ENCODE measurements at regions of chr12 and their contacts with region 1.

Region 1: GRCh38 chr12:54749191-54749818 is 101.1 kb upstream of the DCD start:
- DNase-seq: peak; percentile 41 to 65 (median 59)
- H3K4me3 ChIP-seq: no peak overlapping the region
- H3K4me3 Mint-ChIP-seq: peak overlapping the region in 7 of 8 donors; percentile 50 to 73 (median 68)
- H3K27ac ChIP-seq: no peak overlapping the region
- H3K27ac Mint-ChIP-seq: peak overlapping the region in 2 of 7 donors; percentile 48 to 63
- H3K4me1 ChIP-seq: peaks cover 18% of the 10 kb centered on the region
- H3K4me1 Mint-ChIP-seq: peaks cover 13 to 40% (median 21%) of the 10 kb centered on the region in 4 donors
- H3K27me3 ChIP-seq: no peaks in the 10 kb centered on the region
- H3K27me3 Mint-ChIP-seq: no peaks in the 10 kb centered on the region

Region 2: GRCh38 chr12:54701940-54702592 is 47.2 kb before region 1 on chr12:
- CTCF ChIA-PET with region 1: interaction called, 25 read pairs
- POLR2A ChIA-PET with region 1: no interaction called
- intact Hi-C with region 1: no loop called
- DNase-seq: peak in 4 of 5 donors; percentile 48 to 55 (median 54)
- H3K4me3 ChIP-seq: no peak overlapping the region
- H3K4me3 Mint-ChIP-seq: no peak overlapping the region
- H3K27ac ChIP-seq: no peak overlapping the region
- H3K27ac Mint-ChIP-seq: no peak overlapping the region
- H3K4me1 ChIP-seq: no peaks in the 10 kb centered on the region
- H3K4me1 Mint-ChIP-seq: no peaks in the 10 kb centered on the region
- H3K27me3 ChIP-seq: no peaks in the 10 kb centered on the region
- H3K27me3 Mint-ChIP-seq: peaks cover 5 to 6% of the 10 kb centered on the region in 2 donors

Region 3: GRCh38 chr12:54734196-54734950 is 14.9 kb before region 1 on chr12:
- CTCF ChIA-PET with region 1: interaction called, 17 read pairs
- POLR2A ChIA-PET with region 1: no interaction called
- intact Hi-C with region 1: no loop called
- DNase-seq: no peak
- H3K4me3 ChIP-seq: no peak overlapping the region
- H3K4me3 Mint-ChIP-seq: peak overlapping the region in 1 of 8 donors; percentile 12
- H3K27ac ChIP-seq: no peak overlapping the region
- H3K27ac Mint-ChIP-seq: peak overlapping the region in 2 of 7 donors; percentile 45 to 81
- H3K4me1 ChIP-seq: peaks cover 28% of the 10 kb centered on the region
- H3K4me1 Mint-ChIP-seq: peaks cover 25 to 69% (median 29%) of the 10 kb centered on the region in 4 donors
- H3K27me3 ChIP-seq: no peaks in the 10 kb centered on the region
- H3K27me3 Mint-ChIP-seq: no peaks in the 10 kb centered on the region

Region 4: DNA sequence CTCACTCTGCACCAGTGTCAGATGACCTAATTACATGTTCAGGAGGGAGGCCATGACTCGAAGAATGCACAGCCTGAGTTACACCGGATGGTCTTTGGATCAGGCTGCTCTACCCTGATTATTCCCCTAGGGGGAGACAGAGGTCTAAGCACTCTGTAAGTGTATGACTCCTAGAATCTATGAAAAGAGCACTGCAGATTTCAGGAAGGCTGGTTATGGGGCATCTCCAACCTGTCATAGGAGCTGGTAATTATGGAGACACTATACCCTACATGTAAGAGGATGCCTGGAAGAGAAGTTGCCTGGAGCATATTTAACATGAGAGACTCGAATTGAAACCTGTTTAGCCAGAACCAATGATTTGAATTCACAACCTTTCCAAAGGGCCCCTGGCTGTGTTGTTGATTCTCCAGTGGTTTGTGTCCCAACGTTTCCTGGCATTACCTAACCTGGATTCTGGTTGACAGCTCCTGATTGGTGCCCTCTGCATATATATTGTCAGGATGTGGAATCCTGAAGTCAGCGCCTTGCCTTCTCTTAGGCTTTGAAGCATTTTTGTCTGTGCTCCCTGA is 104.8 kb after region 1 on chr12 and contains the start of gene MUCL1:
- CTCF ChIA-PET with region 1: interaction called, 19 read pairs
- POLR2A ChIA-PET with region 1: no interaction called
- intact Hi-C with region 1: loop called (anchors 1 kb)
- DNase-seq: peak; percentile 67 to 74 (median 69)
- H3K4me3 ChIP-seq: no peak within 1 kb of the TSS
- H3K4me3 Mint-ChIP-seq: no peak within 1 kb of the TSS
- H3K27ac ChIP-seq: no peak within 1 kb of the TSS
- H3K27ac Mint-ChIP-seq: peak within 1 kb of the TSS in 1 of 7 donors; percentile 55
- H3K4me1 ChIP-seq: no peaks in the 10 kb centered on the region
- H3K4me1 Mint-ChIP-seq: no peaks in the 10 kb centered on the region
- H3K27me3 ChIP-seq: no peaks in the 10 kb centered on the region
- H3K27me3 Mint-ChIP-seq: no peaks in the 10 kb centered on the region
- total RNA-seq, gene MUCL1: not detected

Region 5: DNA sequence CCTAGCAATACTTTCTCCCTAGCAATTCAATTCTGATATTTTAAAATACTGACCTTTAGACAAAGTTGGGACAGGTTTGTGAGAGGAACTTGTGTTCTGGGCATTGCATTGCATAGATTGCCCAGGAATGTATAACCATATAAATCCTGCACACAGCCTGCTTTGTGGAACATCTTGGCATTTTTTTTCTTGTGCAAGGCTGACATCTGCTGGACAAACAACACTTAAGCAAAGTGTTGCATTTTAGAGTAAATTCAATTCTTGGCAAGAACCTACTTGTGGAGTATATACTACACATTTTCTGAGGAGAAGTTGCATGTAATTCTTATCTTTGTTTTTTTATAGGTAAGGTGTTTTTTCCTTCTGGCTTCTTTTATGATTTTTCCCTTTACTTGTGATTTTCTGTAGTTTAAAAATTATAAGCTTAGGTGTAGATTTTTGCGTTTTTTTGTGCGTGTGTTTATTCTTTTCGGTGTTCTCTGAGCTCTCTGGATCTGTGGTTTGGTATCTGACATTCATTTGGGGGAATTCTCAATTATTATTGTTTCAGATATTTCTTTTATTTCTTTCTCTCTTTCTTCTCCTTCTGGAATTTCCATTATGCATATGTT is 208.8 kb after region 1 on chr12:
- CTCF ChIA-PET with region 1: interaction called, 98 read pairs
- POLR2A ChIA-PET with region 1: interaction called, 7 read pairs
- intact Hi-C with region 1: loop called (anchors 1 kb)
- DNase-seq: peak; percentile 55 to 68 (median 61)
- H3K4me3 ChIP-seq: no peak overlapping the region
- H3K4me3 Mint-ChIP-seq: peak overlapping the region in 5 of 8 donors; percentile 2 to 65 (median 18)
- H3K27ac ChIP-seq: no peak overlapping the region
- H3K27ac Mint-ChIP-seq: peak overlapping the region; percentile 37 to 84 (median 74)
- H3K4me1 ChIP-seq: peaks cover 85% of the 10 kb centered on the region
- H3K4me1 Mint-ChIP-seq: peaks cover 71 to 94% (median 84%) of the 10 kb centered on the region in 4 donors
- H3K27me3 ChIP-seq: no peaks in the 10 kb centered on the region
- H3K27me3 Mint-ChIP-seq: no peaks in the 10 kb centered on the region

Region 6: DNA sequence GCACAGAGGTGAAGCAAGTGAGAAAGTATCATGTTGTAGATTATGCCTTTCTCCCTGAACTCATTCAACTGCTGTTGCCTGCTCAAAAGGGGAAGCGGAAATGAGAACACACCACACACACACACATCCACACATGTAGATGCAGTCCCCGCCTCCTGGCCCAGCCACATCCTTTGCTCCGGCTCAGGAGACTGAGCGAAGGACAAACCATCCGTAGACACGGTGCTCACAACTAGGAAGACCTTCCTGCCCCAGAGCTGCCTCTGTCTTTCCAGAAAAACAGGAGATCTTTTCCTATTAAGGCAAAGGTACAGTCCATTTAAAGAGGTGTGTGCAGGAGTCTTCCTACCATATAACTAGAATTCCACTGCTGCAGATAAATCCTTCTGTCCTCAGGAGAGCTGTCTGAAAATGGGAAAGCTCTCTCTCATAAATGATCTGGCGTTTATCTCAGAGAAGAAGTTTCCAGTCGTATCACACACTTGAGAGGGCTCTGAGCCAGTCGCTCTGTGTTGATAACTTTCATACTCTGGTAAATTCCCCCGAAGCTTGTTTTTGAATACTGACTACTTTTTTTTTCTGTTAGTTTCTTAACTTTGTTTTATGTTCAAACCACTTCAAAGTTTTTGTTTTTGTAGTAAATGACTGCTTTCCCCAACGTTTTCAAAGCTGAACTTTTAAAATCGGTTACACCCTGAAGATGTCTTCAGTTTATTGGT is 235.5 kb after region 1 on chr12 and contains the start of gene TESPA1:
- CTCF ChIA-PET with region 1: interaction called, 28 read pairs
- POLR2A ChIA-PET with region 1: interaction called, 17 read pairs
- intact Hi-C with region 1: no loop called
- DNase-seq: peak; percentile 86 to 94 (median 90)
- H3K4me3 ChIP-seq: peak within 1 kb of the TSS; percentile 66 to 86
- H3K4me3 Mint-ChIP-seq: peak within 1 kb of the TSS; percentile 89 to 99 (median 95)
- H3K27ac ChIP-seq: peak within 1 kb of the TSS; percentile 92
- H3K27ac Mint-ChIP-seq: peak within 1 kb of the TSS; percentile 97 to 100 (median 98)
- H3K4me1 ChIP-seq: peaks cover 71% of the 10 kb centered on the region
- H3K4me1 Mint-ChIP-seq: peaks cover 53 to 97% (median 64%) of the 10 kb centered on the region in 4 donors
- H3K27me3 ChIP-seq: no peaks in the 10 kb centered on the region
- H3K27me3 Mint-ChIP-seq: no peaks in the 10 kb centered on the region
- total RNA-seq, gene TESPA1: 269 to 287 TPM

Measured in CD4-positive, alpha-beta memory T cell (primary cell).